Endothelial cell of umbilical vein (primary cell): ENCODE measurements at regions of chr5 and their contacts with region 1.

Region 1: GRCh38 chr5:78527054-78527859 is 121.3 kb downstream of the LHFPL2 start:
- DNase-seq: peak; percentile 99
- H3K4me3 ChIP-seq: peak overlapping the region in 1 of 3 experiments; percentile 1
- H3K27ac ChIP-seq: peak overlapping the region; percentile 99
- H3K4me1 ChIP-seq: peaks cover 84% of the 10 kb centered on the region
- H3K27me3 ChIP-seq: no peaks in the 10 kb centered on the region
- CTCF ChIP-seq: no peak
- POLR2A ChIP-seq: no peak

Region 2: GRCh38 chr5:78300464-78301045 is 226.7 kb before region 1 on chr5:
- CTCF ChIA-PET with region 1: no interaction called
- POLR2A ChIA-PET with region 1: no interaction called
- dilution Hi-C with region 1: no loop called
- intact Hi-C with region 1: no loop called
- DNase-seq: no peak
- H3K4me3 ChIP-seq: no peak overlapping the region
- H3K27ac ChIP-seq: no peak overlapping the region
- H3K4me1 ChIP-seq: peaks cover 3% of the 10 kb centered on the region
- H3K27me3 ChIP-seq: peaks cover 2 to 4% of the 10 kb centered on the region in 2 experiments
- CTCF ChIP-seq: peak in 1 of 2 donors; percentile 12
- POLR2A ChIP-seq: no peak

Region 3: DNA sequence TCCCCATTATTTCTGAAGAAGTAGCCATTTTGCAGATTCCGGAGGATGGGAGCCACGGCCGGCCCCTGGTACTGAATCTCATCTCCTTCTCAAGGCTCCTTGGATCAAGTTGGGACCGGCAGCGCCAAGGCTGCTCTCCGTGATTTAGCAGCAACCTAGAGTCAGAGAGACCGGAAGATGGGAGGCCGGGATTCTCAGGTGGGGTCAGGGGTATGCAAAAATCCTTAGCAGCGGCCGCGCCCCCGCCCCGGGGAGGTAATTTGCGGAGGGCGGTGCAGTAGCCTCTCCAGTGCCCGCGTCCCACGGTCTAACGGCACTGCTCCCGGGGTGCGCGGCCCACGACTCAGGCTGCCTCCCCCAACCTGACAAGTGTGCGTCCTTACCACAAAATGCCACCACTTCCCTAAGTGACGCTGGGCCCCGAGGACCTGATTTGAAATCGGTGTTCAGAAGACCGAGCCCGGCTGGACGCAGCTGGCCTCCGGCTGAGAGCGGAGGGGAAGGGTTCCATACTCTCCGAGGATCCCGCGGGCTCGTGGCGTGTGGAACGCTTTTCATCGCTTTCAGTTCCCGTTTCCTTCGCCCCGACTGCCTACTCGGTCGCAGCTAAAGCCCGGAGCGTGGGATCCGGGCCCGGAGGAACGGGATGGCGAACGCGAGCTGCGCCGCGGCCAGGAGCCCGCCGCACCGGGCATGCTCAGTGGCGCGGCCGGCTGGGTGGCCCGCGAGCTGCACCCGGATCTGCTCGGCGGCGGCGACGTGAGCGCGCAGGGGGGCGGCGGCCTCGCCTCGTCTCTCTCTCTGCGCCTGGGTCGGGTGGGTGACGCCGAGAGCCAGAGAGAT is 167.2 kb before region 1 on chr5 and contains the start of gene SCAMP1:
- CTCF ChIA-PET with region 1: no interaction called
- POLR2A ChIA-PET with region 1: no interaction called
- dilution Hi-C with region 1: no loop called
- intact Hi-C with region 1: loop called (anchors 2 kb)
- DNase-seq: peak; percentile 95
- H3K4me3 ChIP-seq: peak within 1 kb of the TSS; percentile 72 to 95 (median 75)
- H3K27ac ChIP-seq: peak within 1 kb of the TSS; percentile 65
- H3K4me1 ChIP-seq: peaks cover 14% of the 10 kb centered on the region
- H3K27me3 ChIP-seq: no peaks in the 10 kb centered on the region
- CTCF ChIP-seq: peak; percentile 10 to 28
- POLR2A ChIP-seq: peak; percentile 73
- total RNA-seq, gene SCAMP1: 29.0 and 30.7 TPM in 2 replicates

Region 4: DNA sequence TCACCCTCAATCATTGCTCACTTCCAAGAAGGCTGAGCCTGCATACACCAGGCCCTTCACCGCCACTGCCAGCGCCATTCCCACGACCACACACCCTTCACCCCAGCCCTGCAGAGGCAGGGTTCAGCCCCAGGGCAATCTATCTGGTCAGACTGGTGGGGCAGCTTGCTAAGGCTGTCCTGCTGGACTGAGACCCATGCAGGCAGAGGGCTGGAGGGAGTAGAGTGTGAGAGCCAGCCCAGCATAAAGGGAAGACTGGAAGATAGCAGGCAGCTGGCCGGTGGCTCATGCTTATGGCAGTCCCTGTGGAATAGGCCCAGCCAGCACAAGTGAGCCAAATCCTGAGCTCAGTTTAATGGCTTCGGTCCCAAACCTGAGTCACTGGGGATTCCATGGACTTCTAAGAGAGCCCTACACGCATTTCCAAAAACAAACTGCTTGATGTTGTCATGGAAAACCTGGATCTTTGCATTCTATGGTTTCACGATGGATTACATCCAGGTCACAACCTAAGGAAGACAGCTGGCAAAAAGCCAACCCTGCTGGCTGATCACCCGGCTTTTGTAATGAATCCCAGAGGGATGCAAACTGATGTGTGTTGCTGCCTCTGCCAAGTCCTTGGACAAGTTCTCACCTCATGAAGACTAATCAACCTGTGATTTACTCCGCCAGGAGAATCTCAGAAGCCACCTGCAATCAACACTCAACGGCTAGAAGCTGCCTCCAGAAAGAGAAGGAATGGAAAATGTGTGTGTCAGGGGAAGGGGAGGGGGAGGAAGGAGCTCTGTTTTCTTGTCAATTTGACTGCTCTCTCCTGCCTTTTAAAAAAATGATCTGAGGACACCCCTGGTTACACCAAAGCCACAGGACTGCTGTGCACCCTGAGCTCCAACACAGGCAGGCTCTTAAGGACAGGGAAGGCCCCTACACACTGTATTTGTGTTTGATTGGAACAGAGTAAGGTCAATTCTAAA is 22.3 kb before region 1 on chr5:
- CTCF ChIA-PET with region 1: interaction called, 11 read pairs
- POLR2A ChIA-PET with region 1: interaction called, 7 read pairs
- dilution Hi-C with region 1: no loop called
- intact Hi-C with region 1: loop called (anchors 1 kb)
- DNase-seq: peak; percentile 100
- H3K4me3 ChIP-seq: no peak overlapping the region
- H3K27ac ChIP-seq: peak overlapping the region; percentile 86
- H3K4me1 ChIP-seq: peaks cover 18% of the 10 kb centered on the region
- H3K27me3 ChIP-seq: no peaks in the 10 kb centered on the region
- CTCF ChIP-seq: no peak
- POLR2A ChIP-seq: no peak

Region 5: DNA sequence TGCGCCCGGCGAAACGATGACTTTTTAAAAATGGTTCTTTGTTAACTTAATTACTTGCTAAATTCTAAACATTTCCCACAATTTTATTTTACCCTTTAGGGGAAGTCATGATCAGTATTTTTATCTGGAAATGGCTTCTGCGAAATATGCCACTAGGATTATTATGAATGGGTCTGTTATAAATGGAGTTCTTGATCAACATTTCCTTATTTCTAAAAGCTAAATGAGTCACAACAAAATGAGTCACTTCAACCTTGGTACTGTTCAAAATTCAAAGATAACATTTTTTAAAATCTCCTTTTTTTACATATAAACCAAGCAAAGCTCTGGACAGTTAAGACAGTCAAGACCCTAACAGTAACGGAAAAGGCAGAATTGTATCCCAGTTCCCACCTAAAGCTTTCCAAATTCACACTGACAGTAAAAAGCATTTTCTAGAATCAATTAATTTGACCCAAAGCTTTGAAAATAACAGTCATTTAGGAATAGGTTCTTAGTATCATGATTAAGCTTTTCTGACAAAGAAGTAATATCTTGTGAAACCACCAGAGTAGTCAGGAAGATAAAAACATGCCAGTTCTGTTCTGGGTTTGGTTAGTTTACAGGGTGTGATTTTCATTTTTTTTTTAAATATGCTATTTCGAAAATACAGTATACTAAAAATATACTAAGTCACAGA is 39.6 kb after region 1 on chr5:
- CTCF ChIA-PET with region 1: interaction called, 3 read pairs
- POLR2A ChIA-PET with region 1: interaction called, 6 read pairs
- dilution Hi-C with region 1: no loop called
- intact Hi-C with region 1: loop called (anchors 1 kb)
- DNase-seq: peak; percentile 74
- H3K4me3 ChIP-seq: no peak overlapping the region
- H3K27ac ChIP-seq: peak overlapping the region; percentile 71
- H3K4me1 ChIP-seq: peaks cover 39% of the 10 kb centered on the region
- H3K27me3 ChIP-seq: no peaks in the 10 kb centered on the region
- CTCF ChIP-seq: no peak
- POLR2A ChIP-seq: no peak

Region 6: DNA sequence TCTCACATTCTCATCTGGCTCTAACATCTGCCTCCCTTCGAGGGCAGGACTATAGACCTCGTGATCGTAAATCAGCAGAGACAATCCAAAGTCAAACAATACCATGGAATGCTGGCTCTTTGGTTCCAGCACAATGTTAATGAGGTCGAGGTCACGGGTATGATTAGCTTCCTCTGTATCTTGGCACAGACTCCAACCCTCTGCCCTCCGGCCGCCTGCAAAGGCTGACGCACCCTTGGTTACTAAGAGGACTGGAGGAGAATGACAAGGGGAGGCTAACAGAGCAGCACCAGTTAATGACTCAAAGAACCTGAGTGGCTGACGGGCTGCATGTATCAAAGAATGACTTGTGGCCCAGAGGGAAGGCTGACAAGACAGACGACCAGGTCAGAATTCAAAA is 111.2 kb after region 1 on chr5:
- CTCF ChIA-PET with region 1: interaction called, 3 read pairs
- POLR2A ChIA-PET with region 1: no interaction called
- dilution Hi-C with region 1: no loop called
- intact Hi-C with region 1: loop called (anchors 1 kb)
- DNase-seq: peak; percentile 99
- H3K4me3 ChIP-seq: no peak overlapping the region
- H3K27ac ChIP-seq: peak overlapping the region; percentile 90
- H3K4me1 ChIP-seq: peaks cover 40% of the 10 kb centered on the region
- H3K27me3 ChIP-seq: no peaks in the 10 kb centered on the region
- CTCF ChIP-seq: no peak
- POLR2A ChIP-seq: peak; percentile 48

Region 7: GRCh38 chr5:78727786-78728761 is 200.8 kb after region 1 on chr5:
- CTCF ChIA-PET with region 1: no interaction called
- POLR2A ChIA-PET with region 1: no interaction called
- dilution Hi-C with region 1: no loop called
- intact Hi-C with region 1: no loop called
- DNase-seq: no peak
- H3K4me3 ChIP-seq: no peak overlapping the region
- H3K27ac ChIP-seq: no peak overlapping the region
- H3K4me1 ChIP-seq: no peaks in the 10 kb centered on the region
- H3K27me3 ChIP-seq: no peaks in the 10 kb centered on the region
- CTCF ChIP-seq: no peak
- POLR2A ChIP-seq: no peak

Region 8: GRCh38 chr5:78841767-78842166 is 314.5 kb after region 1 on chr5:
- CTCF ChIA-PET with region 1: no interaction called
- POLR2A ChIA-PET with region 1: no interaction called
- dilution Hi-C with region 1: no loop called
- intact Hi-C with region 1: loop called (anchors 5 kb)
- DNase-seq: peak; percentile 80
- H3K4me3 ChIP-seq: no peak overlapping the region
- H3K27ac ChIP-seq: no peak overlapping the region
- H3K4me1 ChIP-seq: peaks cover 18% of the 10 kb centered on the region
- H3K27me3 ChIP-seq: peaks cover 3 to 9% of the 10 kb centered on the region in 2 experiments
- CTCF ChIP-seq: no peak
- POLR2A ChIP-seq: no peak